B cell (primary cell): ENCODE measurements at regions of chr7 and their contacts with region 1.

Region 1: DNA sequence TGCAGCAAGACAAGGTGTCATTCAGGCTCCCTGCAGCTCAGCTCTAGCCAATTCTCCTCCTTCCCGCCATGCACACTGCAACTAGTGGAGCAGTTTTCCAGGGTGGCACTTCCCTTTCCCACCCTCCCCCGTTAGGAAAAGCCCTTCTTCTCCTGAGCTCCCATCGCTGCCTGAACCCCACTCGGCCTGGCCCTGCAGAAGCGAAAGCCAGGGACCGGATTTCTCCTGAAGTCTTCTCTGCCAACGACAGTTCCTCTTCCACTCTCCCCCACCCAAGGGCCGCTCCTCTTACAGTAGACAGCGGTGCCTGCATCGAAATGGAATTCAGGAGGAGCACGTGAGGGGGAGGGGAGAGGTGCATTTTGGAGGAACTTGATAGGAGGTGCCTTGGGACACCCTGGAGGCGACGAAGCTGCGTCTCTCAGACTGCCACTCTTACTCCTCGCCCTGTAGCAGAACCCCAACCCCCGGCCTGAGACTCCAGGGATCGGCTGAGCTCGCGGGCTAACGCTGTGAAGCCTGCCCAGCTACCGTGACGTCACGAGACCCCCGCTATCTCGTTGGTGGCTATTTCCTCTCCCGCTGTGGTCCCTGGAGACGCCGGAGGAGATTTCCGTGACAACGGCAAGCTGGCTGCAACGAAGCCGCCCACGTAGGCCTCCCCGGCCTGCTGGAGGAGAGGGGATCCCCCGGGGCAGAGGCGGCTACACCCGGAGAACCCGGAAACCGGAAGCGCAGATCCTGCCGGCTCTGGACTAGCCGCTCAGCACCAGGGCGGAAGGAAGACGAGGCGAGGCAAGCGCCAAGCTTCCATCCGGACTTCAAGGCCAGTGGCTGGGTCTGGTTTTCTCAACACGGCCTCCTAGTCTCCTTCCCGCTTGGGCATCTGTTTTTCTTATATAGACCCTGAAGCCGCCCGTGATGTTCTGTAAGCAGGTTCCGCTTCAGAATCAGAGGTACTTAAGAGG is 109.7 kb downstream of the RALA start:
- DNase-seq: peak; percentile 99
- ATAC-seq: peak; percentile 94
- H3K4me3 ChIP-seq: peak overlapping the region; percentile 17 to 90 (median 75)
- H3K4me3 Mint-ChIP-seq: peak overlapping the region; percentile 89
- H3K27ac ChIP-seq: peak overlapping the region; percentile 82 to 86
- H3K27ac Mint-ChIP-seq: peak overlapping the region; percentile 94
- H3K4me1 ChIP-seq: peaks cover 33 to 45% of the 10 kb centered on the region in 2 donors
- H3K4me1 Mint-ChIP-seq: peaks cover 47% of the 10 kb centered on the region
- H3K27me3 ChIP-seq: no peaks in the 10 kb centered on the region
- H3K27me3 Mint-ChIP-seq: no peaks in the 10 kb centered on the region
- CTCF ChIP-seq: no peak

Region 2: GRCh38 chr7:38351601-38352000 is 1381.5 kb before region 1 on chr7:
- CTCF ChIA-PET with region 1: no interaction called
- POLR2A ChIA-PET with region 1: no interaction called
- intact Hi-C with region 1: loop called (anchors 10 kb)
- DNase-seq: no peak
- ATAC-seq: no peak
- H3K4me3 ChIP-seq: no peak overlapping the region
- H3K4me3 Mint-ChIP-seq: no peak overlapping the region
- H3K27ac ChIP-seq: no peak overlapping the region
- H3K27ac Mint-ChIP-seq: no peak overlapping the region
- H3K4me1 ChIP-seq: peaks cover 10 to 34% of the 10 kb centered on the region in 2 donors
- H3K4me1 Mint-ChIP-seq: peaks cover 24% of the 10 kb centered on the region
- H3K27me3 ChIP-seq: no peaks in the 10 kb centered on the region
- H3K27me3 Mint-ChIP-seq: no peaks in the 10 kb centered on the region
- CTCF ChIP-seq: no peak

Region 3: DNA sequence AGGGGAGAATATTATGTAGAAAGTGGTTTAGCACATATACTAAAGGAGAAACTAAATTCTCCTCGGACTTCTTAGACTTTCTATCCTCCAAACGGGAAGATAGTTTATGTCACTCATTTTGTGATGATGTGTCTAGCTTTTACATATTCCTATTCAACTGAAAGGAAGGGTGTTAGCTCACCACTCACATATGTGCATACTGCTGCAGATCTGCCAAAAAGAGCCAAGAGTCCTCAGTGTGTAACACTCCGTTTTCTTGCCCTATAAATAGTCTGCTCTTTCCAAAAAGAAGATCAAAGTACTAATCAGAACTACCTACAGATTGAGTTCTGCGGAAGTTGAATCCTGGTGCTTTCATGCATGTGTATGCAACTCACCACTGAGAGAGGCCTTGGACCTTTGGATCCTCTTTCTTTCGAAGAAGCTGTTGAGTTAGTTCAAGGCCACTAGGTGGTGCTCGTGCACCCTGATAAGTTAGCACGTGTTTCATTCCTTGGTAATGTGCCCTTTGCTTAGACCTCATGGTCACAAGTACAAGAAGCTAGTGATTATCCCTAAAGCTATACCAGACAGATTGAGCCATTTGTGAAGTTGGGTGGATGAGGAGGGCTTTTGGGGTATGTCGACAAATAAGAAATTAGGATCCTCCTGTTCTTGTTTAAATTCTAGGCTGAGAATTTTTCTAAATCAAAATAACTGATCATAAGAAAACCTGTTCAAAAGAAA is 152.8 kb before region 1 on chr7:
- CTCF ChIA-PET with region 1: interaction called, 579 read pairs
- POLR2A ChIA-PET with region 1: no interaction called
- intact Hi-C with region 1: loop called (anchors 5 kb)
- DNase-seq: peak; percentile 87
- ATAC-seq: peak; percentile 95
- H3K4me3 ChIP-seq: no peak overlapping the region
- H3K4me3 Mint-ChIP-seq: no peak overlapping the region
- H3K27ac ChIP-seq: no peak overlapping the region
- H3K27ac Mint-ChIP-seq: no peak overlapping the region
- H3K4me1 ChIP-seq: no peaks in the 10 kb centered on the region
- H3K4me1 Mint-ChIP-seq: no peaks in the 10 kb centered on the region
- H3K27me3 ChIP-seq: no peaks in the 10 kb centered on the region
- H3K27me3 Mint-ChIP-seq: no peaks in the 10 kb centered on the region
- CTCF ChIP-seq: peak; percentile 93

Region 4: GRCh38 chr7:39746103-39746819 is 13.1 kb after region 1 on chr7:
- CTCF ChIA-PET with region 1: interaction called, 52 read pairs
- POLR2A ChIA-PET with region 1: no interaction called
- intact Hi-C with region 1: loop called (anchors 1 kb)
- DNase-seq: peak; percentile 71
- ATAC-seq: peak; percentile 51
- H3K4me3 ChIP-seq: no peak overlapping the region
- H3K4me3 Mint-ChIP-seq: no peak overlapping the region
- H3K27ac ChIP-seq: no peak overlapping the region
- H3K27ac Mint-ChIP-seq: no peak overlapping the region
- H3K4me1 ChIP-seq: peaks cover 0 to 6% of the 10 kb centered on the region in 2 donors
- H3K4me1 Mint-ChIP-seq: peaks cover 15% of the 10 kb centered on the region
- H3K27me3 ChIP-seq: no peaks in the 10 kb centered on the region
- H3K27me3 Mint-ChIP-seq: no peaks in the 10 kb centered on the region
- CTCF ChIP-seq: peak; percentile 75